Activated B cell treated with CpG ODN at 0.5 μM for 24 hours (primary cell): ENCODE measurements at regions of chr16 and their contacts with region 1.

Region 1: DNA sequence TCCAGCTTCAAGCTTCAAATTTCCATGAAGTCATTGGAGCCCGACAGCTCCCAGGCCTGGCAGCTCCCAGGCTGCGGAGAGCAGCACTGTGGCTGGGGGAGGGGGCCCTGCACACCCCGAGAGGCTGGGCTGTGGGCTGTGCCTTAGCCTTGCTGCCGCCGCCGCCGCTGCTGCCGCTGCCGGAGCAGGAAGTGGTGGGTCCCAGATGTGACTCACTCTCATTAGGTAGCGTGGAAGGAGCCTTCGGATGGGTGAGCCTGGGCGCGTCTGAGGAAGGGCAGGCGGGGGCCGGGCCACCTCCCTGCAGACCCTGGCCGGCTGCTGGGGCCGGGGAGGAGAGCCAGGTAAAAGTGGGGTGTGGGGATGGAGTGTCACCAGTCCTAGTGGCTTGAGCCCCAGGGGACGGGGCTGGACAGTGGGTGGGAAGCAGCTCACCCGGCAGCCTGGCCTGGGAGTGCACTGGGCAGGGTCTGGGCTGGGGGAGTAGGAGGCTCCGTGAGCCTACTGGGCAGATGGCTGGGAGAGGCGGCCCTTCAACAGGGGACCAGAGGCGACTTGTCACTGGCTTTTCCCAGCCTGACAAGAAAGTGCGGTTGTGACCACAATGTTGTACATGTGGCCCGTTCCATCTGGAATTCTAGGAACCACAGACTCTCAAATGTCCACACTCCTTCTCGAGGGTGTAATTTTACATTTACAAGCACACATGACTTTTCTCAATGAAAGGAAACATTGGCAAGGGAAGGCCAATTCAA is at the start of gene ADCY7:
- DNase-seq: peak; percentile 61
- ATAC-seq: peak; percentile 93
- H3K4me3 Mint-ChIP-seq: peak within 1 kb of the TSS; percentile 84
- H3K27ac Mint-ChIP-seq: peak within 1 kb of the TSS; percentile 90
- H3K4me1 Mint-ChIP-seq: peaks cover 70% of the 10 kb centered on the region
- H3K27me3 Mint-ChIP-seq: no peaks in the 10 kb centered on the region
- CTCF ChIP-seq: no peak
- total RNA-seq, gene ADCY7: 109 and 128 TPM in 2 replicates

Region 2: DNA sequence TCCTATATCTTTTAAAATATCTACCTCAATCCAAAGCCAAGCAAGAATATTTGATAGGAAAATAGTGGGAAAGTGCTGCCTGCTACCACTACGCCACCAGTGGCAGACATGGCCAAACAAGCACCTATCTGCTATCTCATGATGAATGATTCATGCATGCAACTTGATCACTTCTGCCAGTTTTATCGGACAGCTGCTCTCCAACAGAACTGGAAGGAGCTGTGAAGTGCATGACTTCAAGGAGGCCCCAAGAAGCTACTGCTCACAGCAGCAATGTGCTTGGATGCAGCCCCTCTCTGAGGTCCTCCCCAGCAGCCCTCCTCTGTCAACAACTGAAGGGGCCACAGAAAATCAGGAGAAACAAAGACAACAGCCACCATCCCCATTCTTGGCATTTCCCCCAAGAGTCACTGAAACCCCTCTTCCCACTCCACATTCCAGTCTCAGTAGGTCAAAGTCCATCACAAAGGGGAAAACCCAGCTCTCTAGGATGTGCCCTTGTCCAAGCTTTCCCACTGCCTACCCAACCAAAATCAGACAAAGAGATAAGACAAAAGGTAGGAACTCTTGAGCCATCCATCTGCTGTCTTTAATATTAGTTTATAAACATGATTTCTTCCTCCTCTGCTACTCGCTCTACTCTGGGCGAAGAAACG is 677.7 kb before region 1 on chr16:
- CTCF ChIA-PET with region 1: no interaction called
- POLR2A ChIA-PET with region 1: no interaction called
- intact Hi-C with region 1: no loop called
- DNase-seq: no peak
- ATAC-seq: no peak
- H3K4me3 Mint-ChIP-seq: no peak overlapping the region
- H3K27ac Mint-ChIP-seq: no peak overlapping the region
- H3K4me1 Mint-ChIP-seq: no peaks in the 10 kb centered on the region
- H3K27me3 Mint-ChIP-seq: peaks cover 10% of the 10 kb centered on the region
- CTCF ChIP-seq: no peak

Region 3: GRCh38 chr16:49734331-49734730 is 532.2 kb before region 1 on chr16:
- CTCF ChIA-PET with region 1: no interaction called
- POLR2A ChIA-PET with region 1: no interaction called
- intact Hi-C with region 1: no loop called
- DNase-seq: no peak
- ATAC-seq: no peak
- H3K4me3 Mint-ChIP-seq: no peak overlapping the region
- H3K27ac Mint-ChIP-seq: no peak overlapping the region
- H3K4me1 Mint-ChIP-seq: no peaks in the 10 kb centered on the region
- H3K27me3 Mint-ChIP-seq: no peaks in the 10 kb centered on the region
- CTCF ChIP-seq: no peak

Region 4: DNA sequence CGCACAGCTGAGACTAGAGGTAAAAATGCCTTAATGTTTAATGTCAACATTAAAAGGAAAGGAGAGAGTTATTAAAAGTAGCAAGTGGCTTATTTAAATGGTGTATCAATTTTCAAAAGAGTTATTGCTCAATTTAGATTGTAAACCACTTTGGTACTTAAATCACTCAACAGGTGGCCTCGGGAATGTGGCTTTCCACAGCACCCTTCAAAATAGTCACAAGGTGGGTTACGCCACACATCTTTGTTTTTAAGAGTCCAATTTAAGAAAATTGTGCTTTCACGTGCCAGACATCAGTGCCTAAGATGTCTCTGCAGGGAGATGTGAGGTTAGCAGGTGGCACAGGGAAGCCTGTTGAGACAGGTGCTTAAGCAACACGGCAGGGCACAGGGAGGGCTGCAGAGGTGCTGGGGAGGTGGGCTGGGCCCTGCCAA is 27.6 kb before region 1 on chr16:
- CTCF ChIA-PET with region 1: no interaction called
- POLR2A ChIA-PET with region 1: no interaction called
- intact Hi-C with region 1: no loop called
- DNase-seq: no peak
- ATAC-seq: no peak
- H3K4me3 Mint-ChIP-seq: no peak overlapping the region
- H3K27ac Mint-ChIP-seq: no peak overlapping the region
- H3K4me1 Mint-ChIP-seq: no peaks in the 10 kb centered on the region
- H3K27me3 Mint-ChIP-seq: peaks cover 3% of the 10 kb centered on the region
- CTCF ChIP-seq: no peak

Region 5: DNA sequence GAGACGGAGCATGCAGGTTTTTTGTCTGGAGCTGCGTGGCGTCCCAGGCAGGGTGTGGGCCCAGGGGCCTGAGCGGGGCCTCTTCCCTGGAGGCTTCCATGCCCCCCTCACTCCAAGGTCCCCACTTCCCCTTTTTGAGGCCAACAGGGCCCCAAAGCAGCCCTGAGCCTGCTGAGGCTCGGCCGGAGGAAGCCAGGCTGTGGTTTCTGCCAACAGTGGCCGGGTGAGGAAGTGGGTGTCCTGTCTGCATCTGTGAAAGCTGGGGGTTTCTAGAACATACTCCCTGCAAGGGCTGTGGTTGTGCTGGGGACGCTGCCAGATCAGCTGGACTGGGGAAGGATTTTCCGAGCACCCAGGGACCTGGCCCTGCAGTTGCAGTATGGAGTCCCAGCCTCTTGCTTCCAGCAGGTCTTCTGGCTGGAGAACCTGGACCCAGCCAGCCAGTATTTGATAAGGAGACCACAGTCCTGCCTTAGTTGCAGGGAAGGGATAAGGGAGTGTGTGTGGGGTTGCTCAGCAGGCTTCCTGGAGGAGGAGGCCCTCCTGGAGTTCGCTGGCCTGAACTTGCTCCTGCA is 15.5 kb after region 1 on chr16:
- CTCF ChIA-PET with region 1: interaction called, 10 read pairs
- POLR2A ChIA-PET with region 1: interaction called, 244 read pairs
- intact Hi-C with region 1: loop called (anchors 1 kb)
- DNase-seq: peak; percentile 74
- ATAC-seq: peak; percentile 86
- H3K4me3 Mint-ChIP-seq: peak overlapping the region; percentile 69
- H3K27ac Mint-ChIP-seq: peak overlapping the region; percentile 100
- H3K4me1 Mint-ChIP-seq: peaks cover 90% of the 10 kb centered on the region
- H3K27me3 Mint-ChIP-seq: no peaks in the 10 kb centered on the region
- CTCF ChIP-seq: no peak